PC-3 (cell line): ENCODE measurements at regions of chr12 and their contacts with region 1.

Region 1: DNA sequence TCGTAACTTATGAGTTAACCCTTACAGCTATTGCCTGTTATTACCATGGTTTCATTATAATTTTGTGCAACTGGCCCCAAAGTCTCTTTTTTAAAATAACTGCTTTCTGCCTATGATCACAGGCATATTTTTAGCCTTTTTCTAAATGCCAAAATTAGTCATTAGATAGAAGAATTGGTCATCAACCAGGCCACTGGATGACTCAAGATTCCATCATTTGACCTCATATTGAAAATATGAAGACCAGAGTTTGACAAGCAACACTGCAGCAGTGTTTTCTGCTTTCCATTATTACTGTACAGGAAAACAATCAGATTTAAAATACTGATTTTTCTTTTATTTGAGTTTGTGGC is 54.7 kb upstream of the OTOGL start:
- DNase-seq: peak; percentile 96
- ATAC-seq: peak; percentile 66
- H3K4me3 ChIP-seq: peak overlapping the region; percentile 53; the same call in 1 of the 2 replicates
- H3K27ac ChIP-seq: peak overlapping the region; percentile 91
- H3K4me1 ChIP-seq: peaks cover 38% of the 10 kb centered on the region
- H3K27me3 ChIP-seq: no peaks in the 10 kb centered on the region
- CTCF ChIP-seq: no peak

Region 2: GRCh38 chr12:79645235-79645630 is 399.4 kb before region 1 on chr12:
- CTCF ChIA-PET with region 1: no interaction called
- POLR2A ChIA-PET with region 1: interaction called, 13 read pairs
- intact Hi-C with region 1: no loop called
- DNase-seq: no peak
- ATAC-seq: no peak
- H3K4me3 ChIP-seq: no peak overlapping the region
- H3K27ac ChIP-seq: no peak overlapping the region
- H3K4me1 ChIP-seq: peaks cover 11% of the 10 kb centered on the region; the same call in 1 of the 2 replicates
- H3K27me3 ChIP-seq: no peaks in the 10 kb centered on the region
- CTCF ChIP-seq: no peak

Region 3: DNA sequence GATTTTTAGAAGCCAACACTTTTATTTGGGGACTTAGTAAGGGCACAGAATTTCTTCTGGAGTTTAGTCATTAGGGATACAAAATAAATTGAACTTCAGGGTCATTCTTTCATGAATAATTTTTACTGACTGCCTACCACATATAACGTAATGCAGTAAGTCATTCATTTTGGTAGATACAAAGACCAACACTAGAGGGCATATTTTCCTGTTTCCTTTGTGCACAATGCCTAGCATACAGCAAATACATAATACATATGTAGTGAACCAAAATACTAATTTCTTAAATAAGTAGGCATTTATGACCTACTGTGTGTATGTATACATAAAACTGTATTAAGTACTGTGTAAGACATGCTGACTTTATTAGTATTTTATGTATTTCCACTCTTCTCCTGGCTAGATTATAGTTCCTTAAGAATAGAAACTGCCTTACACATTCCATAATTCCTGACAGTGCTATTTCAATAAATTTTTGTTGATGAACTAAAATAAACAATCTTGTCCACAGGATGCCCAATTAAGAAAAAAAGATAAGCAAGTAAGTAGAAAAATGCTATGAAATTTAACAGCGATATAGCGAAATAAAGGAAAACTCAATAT is 157.7 kb before region 1 on chr12:
- CTCF ChIA-PET with region 1: no interaction called
- POLR2A ChIA-PET with region 1: no interaction called
- intact Hi-C with region 1: loop called (anchors 5 kb)
- DNase-seq: peak; percentile 84
- ATAC-seq: peak; percentile 78
- H3K4me3 ChIP-seq: no peak overlapping the region
- H3K27ac ChIP-seq: no peak overlapping the region
- H3K4me1 ChIP-seq: peaks cover 12% of the 10 kb centered on the region
- H3K27me3 ChIP-seq: no peaks in the 10 kb centered on the region
- CTCF ChIP-seq: peak; percentile 87

Region 4: DNA sequence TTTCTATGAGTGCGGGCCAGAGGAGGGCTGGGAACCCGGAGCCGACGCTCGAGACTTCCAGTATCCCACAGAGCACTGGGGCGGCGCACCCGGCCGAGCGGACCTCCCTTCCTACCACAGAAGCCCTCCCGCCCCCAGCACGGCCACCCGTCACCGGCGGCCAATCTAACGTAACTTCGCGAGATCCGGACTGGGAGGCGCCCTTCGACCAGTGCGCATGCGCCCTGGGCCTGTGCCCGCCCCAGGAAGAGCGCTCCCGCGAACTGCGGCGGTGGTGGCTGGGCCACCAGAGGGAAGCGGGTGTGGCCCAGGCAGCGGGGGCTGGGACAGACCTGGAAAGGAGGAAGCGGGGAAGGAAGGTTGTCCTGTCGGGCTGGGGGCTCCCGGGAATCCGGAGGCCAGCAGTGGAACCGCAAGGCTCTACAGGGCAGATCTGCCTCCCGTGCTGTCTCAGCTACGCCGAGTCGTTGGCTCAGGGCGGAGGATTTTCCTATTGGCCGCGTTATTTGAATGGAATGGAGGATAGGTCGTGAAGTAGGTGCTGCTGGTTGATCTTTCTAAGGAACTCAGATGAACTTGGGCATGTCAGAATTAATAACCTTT is 109.5 kb before region 1 on chr12 and contains the start of gene PPP1R12A:
- CTCF ChIA-PET with region 1: no interaction called
- POLR2A ChIA-PET with region 1: interaction called, 6 read pairs
- intact Hi-C with region 1: loop called (anchors 1 kb)
- DNase-seq: peak; percentile 98
- ATAC-seq: peak; percentile 88
- H3K4me3 ChIP-seq: peak within 1 kb of the TSS; percentile 95
- H3K27ac ChIP-seq: peak within 1 kb of the TSS; percentile 73
- H3K4me1 ChIP-seq: peaks cover 19% of the 10 kb centered on the region
- H3K27me3 ChIP-seq: no peaks in the 10 kb centered on the region
- CTCF ChIP-seq: no peak
- total RNA-seq, gene PPP1R12A: 43.2 and 67.5 TPM in 2 replicates

Region 5: GRCh38 chr12:79983986-79984620 is 60.6 kb before region 1 on chr12:
- CTCF ChIA-PET with region 1: no interaction called
- POLR2A ChIA-PET with region 1: interaction called, 3 read pairs
- intact Hi-C with region 1: loop called (anchors 1 kb)
- DNase-seq: peak; percentile 70
- ATAC-seq: peak; percentile 55
- H3K4me3 ChIP-seq: no peak overlapping the region
- H3K27ac ChIP-seq: peak overlapping the region; percentile 70
- H3K4me1 ChIP-seq: peaks cover 37% of the 10 kb centered on the region
- H3K27me3 ChIP-seq: no peaks in the 10 kb centered on the region
- CTCF ChIP-seq: no peak

Region 6: GRCh38 chr12:80033448-80033847 is 11.2 kb before region 1 on chr12:
- CTCF ChIA-PET with region 1: no interaction called
- POLR2A ChIA-PET with region 1: interaction called, 4 read pairs
- intact Hi-C with region 1: loop called (anchors 1 kb)
- DNase-seq: peak; percentile 89
- ATAC-seq: peak; percentile 95
- H3K4me3 ChIP-seq: no peak overlapping the region
- H3K27ac ChIP-seq: peak overlapping the region; percentile 42
- H3K4me1 ChIP-seq: peaks cover 16% of the 10 kb centered on the region
- H3K27me3 ChIP-seq: no peaks in the 10 kb centered on the region
- CTCF ChIP-seq: no peak

Region 7: DNA sequence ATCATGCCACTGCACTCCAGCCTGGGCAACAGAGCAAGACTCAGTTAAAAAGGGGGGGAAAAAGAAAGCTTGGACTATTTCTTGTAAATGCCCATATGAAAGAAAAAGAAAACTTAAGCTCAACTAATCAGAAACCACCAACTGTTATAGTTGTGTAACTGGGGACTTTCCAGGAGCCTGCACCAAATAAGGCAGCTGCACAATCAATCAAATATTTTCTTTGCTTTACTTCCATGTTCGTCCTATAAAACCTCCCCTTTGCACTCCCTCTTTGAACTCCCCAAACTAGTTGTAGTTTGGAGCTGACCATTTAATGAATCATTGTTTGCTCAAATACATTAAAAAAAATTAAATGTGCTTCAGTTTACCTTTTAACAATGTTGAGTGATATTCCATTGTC is 109.6 kb after region 1 on chr12:
- CTCF ChIA-PET with region 1: no interaction called
- POLR2A ChIA-PET with region 1: no interaction called
- intact Hi-C with region 1: loop called (anchors 1 kb)
- DNase-seq: peak; percentile 92
- ATAC-seq: peak; percentile 96
- H3K4me3 ChIP-seq: no peak overlapping the region
- H3K27ac ChIP-seq: peak overlapping the region; percentile 76
- H3K4me1 ChIP-seq: peaks cover 20% of the 10 kb centered on the region
- H3K27me3 ChIP-seq: no peaks in the 10 kb centered on the region
- CTCF ChIP-seq: no peak